Breast epithelium (tissue), 4 donors: ENCODE measurements at regions of chr6 and their contacts with region 1.

Region 1: DNA sequence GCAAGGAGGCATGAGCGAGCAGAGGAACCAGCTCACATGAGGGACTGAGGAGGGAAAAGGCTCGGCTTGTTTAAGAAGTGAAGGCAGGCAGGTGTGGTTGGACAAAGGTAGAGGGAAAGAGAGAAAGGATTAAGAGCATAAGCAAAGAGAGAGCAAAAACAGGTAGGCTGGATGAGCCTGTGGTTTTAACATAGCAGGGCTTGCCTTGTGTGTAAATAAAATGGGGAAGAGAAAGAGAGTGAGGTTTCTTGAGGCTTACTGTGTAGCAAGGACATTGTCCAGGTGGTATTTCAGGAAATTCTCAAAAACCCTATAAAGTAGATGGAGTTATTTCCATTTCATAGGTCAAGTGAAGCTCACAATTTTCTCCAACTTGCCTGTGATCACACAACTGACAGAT is 93.9 kb upstream of the HDAC2 start:
- DNase-seq: no peak
- H3K4me3 ChIP-seq: no peak overlapping the region
- H3K27ac ChIP-seq: no peak overlapping the region
- H3K4me1 ChIP-seq: no peaks in the 10 kb centered on the region
- H3K27me3 ChIP-seq: no peaks in the 10 kb centered on the region
- CTCF ChIP-seq: no peak
- POLR2A ChIP-seq: no peak

Region 2: DNA sequence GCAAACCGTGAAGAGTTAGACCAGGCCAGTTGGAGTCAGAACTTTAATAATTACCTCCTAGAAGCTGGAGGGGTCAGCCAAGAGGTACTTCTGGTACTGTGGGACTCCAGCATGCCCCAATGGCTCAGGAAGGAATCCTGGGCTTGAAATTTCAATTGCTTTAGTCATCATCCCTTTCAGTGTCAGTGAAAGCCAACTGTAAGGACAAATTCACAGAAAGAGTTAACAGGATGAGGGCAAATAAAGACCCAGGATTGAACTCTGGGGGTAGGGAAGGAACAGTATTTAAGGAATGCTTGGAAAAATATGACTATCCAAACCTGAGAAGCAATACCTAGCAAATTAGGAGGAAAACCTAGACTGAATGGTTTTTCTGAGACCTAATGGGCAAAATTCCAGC is 942.8 kb before region 1 on chr6:
- intact Hi-C with region 1: loop called (anchors 5 kb)
- DNase-seq: no peak
- H3K4me3 ChIP-seq: no peak overlapping the region
- H3K27ac ChIP-seq: no peak overlapping the region
- H3K4me1 ChIP-seq: no peaks in the 10 kb centered on the region
- H3K27me3 ChIP-seq: no peaks in the 10 kb centered on the region
- CTCF ChIP-seq: no peak
- POLR2A ChIP-seq: no peak